Activated CD4-positive, alpha-beta T cell treated with anti-CD3 and anti-CD28 coated beads for 36 hours (primary cell): ENCODE measurements at regions of chr18 and their contacts with region 1.

Region 1: GRCh38 chr18:13268158-13269012 is 49.8 kb downstream of the LDLRAD4 start:
- DNase-seq: no peak
- ATAC-seq: no peak
- H3K4me3 Mint-ChIP-seq: peak overlapping the region; percentile 2
- H3K27ac Mint-ChIP-seq: peak overlapping the region; percentile 85
- H3K4me1 Mint-ChIP-seq: peaks cover 77% of the 10 kb centered on the region
- H3K27me3 Mint-ChIP-seq: no peaks in the 10 kb centered on the region

Region 2: DNA sequence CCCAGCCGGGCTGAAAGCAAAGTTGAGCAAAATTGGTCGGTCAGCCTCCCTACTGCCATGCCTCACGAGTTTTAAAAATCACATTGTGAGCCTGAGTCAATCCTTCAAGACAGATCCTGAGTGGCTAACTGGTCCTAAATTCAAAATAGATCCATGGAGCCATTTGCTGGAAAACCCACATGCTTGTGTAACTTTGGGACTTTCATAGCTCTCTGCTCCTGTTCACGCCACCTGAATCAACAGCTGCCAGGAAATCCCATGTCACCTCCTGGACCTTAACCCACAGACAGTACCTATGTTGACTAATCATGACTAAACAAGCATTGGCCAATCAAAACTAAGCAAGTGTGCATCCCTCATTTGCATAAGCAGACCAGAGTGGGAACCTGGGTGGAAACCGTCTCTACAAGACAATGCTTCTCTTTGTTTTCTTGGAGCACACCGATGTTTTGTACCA is 92.6 kb before region 1 on chr18:
- CTCF ChIA-PET with region 1: no interaction called
- POLR2A ChIA-PET with region 1: no interaction called
- intact Hi-C with region 1: loop called in 1 of 2 experiments (anchors 5 kb)
- DNase-seq: peak; percentile 52
- ATAC-seq: peak; percentile 68
- H3K4me3 Mint-ChIP-seq: no peak overlapping the region
- H3K27ac Mint-ChIP-seq: peak overlapping the region; percentile 37
- H3K4me1 Mint-ChIP-seq: peaks cover 34% of the 10 kb centered on the region
- H3K27me3 Mint-ChIP-seq: no peaks in the 10 kb centered on the region

Region 3: GRCh38 chr18:13289481-13290205 is 21.3 kb after region 1 on chr18:
- CTCF ChIA-PET with region 1: interaction called, 14 read pairs
- POLR2A ChIA-PET with region 1: interaction called, 3 read pairs
- intact Hi-C with region 1: loop called (anchors 1 kb)
- DNase-seq: no peak
- ATAC-seq: no peak
- H3K4me3 Mint-ChIP-seq: no peak overlapping the region
- H3K27ac Mint-ChIP-seq: peak overlapping the region; percentile 48
- H3K4me1 Mint-ChIP-seq: peaks cover 52% of the 10 kb centered on the region
- H3K27me3 Mint-ChIP-seq: no peaks in the 10 kb centered on the region

Region 4: GRCh38 chr18:13302457-13303225 is 34.3 kb after region 1 on chr18:
- CTCF ChIA-PET with region 1: no interaction called
- POLR2A ChIA-PET with region 1: no interaction called
- intact Hi-C with region 1: no loop called
- DNase-seq: no peak
- ATAC-seq: no peak
- H3K4me3 Mint-ChIP-seq: no peak overlapping the region
- H3K27ac Mint-ChIP-seq: no peak overlapping the region
- H3K4me1 Mint-ChIP-seq: peaks cover 19% of the 10 kb centered on the region
- H3K27me3 Mint-ChIP-seq: no peaks in the 10 kb centered on the region

Region 5: DNA sequence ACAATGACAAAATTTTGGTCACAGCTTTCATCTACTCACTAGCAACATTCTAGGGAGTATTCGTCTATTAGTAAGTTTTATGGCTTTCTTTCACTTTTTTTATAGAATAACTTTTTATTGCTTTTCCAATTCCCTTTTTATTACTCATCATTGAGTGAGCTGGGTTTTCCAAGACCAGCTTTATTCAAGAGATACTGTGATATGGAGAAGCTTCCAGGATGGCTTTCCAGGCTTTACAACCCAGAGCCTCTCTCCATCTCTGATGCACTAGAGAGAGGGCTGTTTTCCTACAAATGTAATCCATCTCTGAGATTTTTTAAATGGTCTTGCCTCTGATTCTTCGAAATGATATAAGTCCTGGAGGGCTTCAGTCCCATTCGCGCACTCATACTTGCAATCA is 68.5 kb after region 1 on chr18:
- CTCF ChIA-PET with region 1: no interaction called
- POLR2A ChIA-PET with region 1: no interaction called
- intact Hi-C with region 1: no loop called
- DNase-seq: no peak
- ATAC-seq: no peak
- H3K4me3 Mint-ChIP-seq: no peak overlapping the region
- H3K27ac Mint-ChIP-seq: no peak overlapping the region
- H3K4me1 Mint-ChIP-seq: peaks cover 16% of the 10 kb centered on the region
- H3K27me3 Mint-ChIP-seq: no peaks in the 10 kb centered on the region

Region 6: GRCh38 chr18:13381944-13382365 is 113.6 kb after region 1 on chr18:
- CTCF ChIA-PET with region 1: interaction called, 4 read pairs
- POLR2A ChIA-PET with region 1: interaction called, 19 read pairs
- intact Hi-C with region 1: loop called in 1 of 2 experiments (anchors 1 kb)
- DNase-seq: peak; percentile 59
- ATAC-seq: peak; percentile 26
- H3K4me3 Mint-ChIP-seq: peak overlapping the region; percentile 72
- H3K27ac Mint-ChIP-seq: peak overlapping the region; percentile 98
- H3K4me1 Mint-ChIP-seq: peaks cover 76% of the 10 kb centered on the region
- H3K27me3 Mint-ChIP-seq: no peaks in the 10 kb centered on the region

Region 7: DNA sequence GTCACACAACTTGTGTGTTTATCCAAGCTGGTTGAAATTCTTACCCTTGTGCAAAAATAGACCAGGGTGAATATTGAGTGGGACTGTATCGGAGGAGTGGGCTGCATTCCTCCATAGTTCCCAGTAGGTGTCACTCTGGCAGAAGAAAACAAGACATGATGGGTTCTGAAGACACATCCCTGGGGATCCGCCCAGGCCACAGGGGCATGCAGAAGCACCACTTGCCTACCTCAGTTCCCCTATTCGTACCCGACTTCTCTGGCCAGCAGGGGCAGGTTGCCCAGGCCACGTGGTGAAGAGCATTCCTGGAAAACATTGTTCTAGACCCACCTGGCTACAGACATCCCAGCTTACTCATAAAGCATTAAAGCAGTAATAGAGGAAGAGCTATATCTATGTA is 289.7 kb after region 1 on chr18:
- CTCF ChIA-PET with region 1: interaction called, 4 read pairs
- POLR2A ChIA-PET with region 1: interaction called, 4 read pairs
- intact Hi-C with region 1: loop called (anchors 2 to 5 kb)
- DNase-seq: peak; percentile 58
- ATAC-seq: peak; percentile 29
- H3K4me3 Mint-ChIP-seq: no peak overlapping the region
- H3K27ac Mint-ChIP-seq: no peak overlapping the region
- H3K4me1 Mint-ChIP-seq: peaks cover 41% of the 10 kb centered on the region
- H3K27me3 Mint-ChIP-seq: no peaks in the 10 kb centered on the region